Calu3 (cell line): ENCODE measurements at regions of chr1 and their contacts with region 1.

Region 1: DNA sequence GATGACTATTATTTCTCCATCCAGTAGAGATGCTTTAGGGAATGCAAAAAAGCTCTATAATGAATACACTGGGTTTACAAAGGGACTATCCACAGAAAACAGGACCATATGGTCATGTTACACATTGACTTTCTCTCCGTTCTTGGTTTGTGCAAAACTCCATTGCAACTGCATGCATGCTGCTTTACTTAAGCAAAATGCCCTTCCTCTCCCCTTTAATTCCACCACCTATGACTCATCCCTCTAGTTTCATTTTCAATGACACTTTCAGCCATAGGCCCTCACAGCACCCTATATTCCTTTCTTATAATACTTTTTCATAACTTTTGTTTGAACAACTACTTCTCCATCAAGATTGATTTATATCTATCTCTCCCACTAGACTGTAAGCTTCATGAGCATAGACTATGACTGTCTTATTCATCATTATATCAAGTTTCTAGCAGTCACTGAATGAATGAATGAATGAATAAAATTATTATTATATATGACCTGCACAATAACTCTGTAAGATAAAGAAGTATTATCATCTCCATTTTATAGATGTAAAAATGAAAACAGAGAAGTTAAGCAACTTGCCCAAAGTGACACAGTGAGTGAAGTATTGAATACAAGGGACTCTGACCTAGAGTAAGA is 248.9 kb downstream of the PLPP3 start:
- DNase-seq: no peak
- H3K4me3 Mint-ChIP-seq: peak overlapping the region; percentile 24
- H3K27ac Mint-ChIP-seq: peak overlapping the region; percentile 94
- H3K4me1 Mint-ChIP-seq: peaks cover 46% of the 10 kb centered on the region
- H3K27me3 Mint-ChIP-seq: no peaks in the 10 kb centered on the region
- CTCF ChIP-seq: no peak

Region 2: GRCh38 chr1:56387071-56387740 is 56.7 kb after region 1 on chr1:
- CTCF ChIA-PET with region 1: no interaction called
- intact Hi-C with region 1: loop called (anchors 5 kb)
- DNase-seq: peak; percentile 25
- H3K4me3 Mint-ChIP-seq: no peak overlapping the region
- H3K27ac Mint-ChIP-seq: peak overlapping the region; percentile 27
- H3K4me1 Mint-ChIP-seq: peaks cover 20% of the 10 kb centered on the region
- H3K27me3 Mint-ChIP-seq: no peaks in the 10 kb centered on the region
- CTCF ChIP-seq: no peak

Region 3: GRCh38 chr1:56525489-56526041 is 195.1 kb after region 1 on chr1:
- CTCF ChIA-PET with region 1: no interaction called
- intact Hi-C with region 1: no loop called
- DNase-seq: no peak
- H3K4me3 Mint-ChIP-seq: no peak overlapping the region
- H3K27ac Mint-ChIP-seq: no peak overlapping the region
- H3K4me1 Mint-ChIP-seq: peaks cover 25% of the 10 kb centered on the region
- H3K27me3 Mint-ChIP-seq: no peaks in the 10 kb centered on the region
- CTCF ChIP-seq: no peak